Activated B cell treated with CpG ODN at 0.5 μM for 24 hours (primary cell): ENCODE measurements at regions of chr10 and their contacts with region 1.

Region 1: GRCh38 chr10:133329491-133330202 is 7.0 kb downstream of the CALY start:
- DNase-seq: peak; percentile 84
- ATAC-seq: peak; percentile 90
- H3K4me3 Mint-ChIP-seq: peak overlapping the region; percentile 41
- H3K27ac Mint-ChIP-seq: no peak overlapping the region
- H3K4me1 Mint-ChIP-seq: peaks cover 18% of the 10 kb centered on the region
- H3K27me3 Mint-ChIP-seq: peaks cover 39% of the 10 kb centered on the region
- CTCF ChIP-seq: peak; percentile 69

Region 2: GRCh38 chr10:132654702-132655661 is 674.7 kb before region 1 on chr10:
- CTCF ChIA-PET with region 1: no interaction called
- POLR2A ChIA-PET with region 1: no interaction called
- intact Hi-C with region 1: loop called (anchors 10 kb)
- DNase-seq: peak; percentile 46
- ATAC-seq: peak; percentile 77
- H3K4me3 Mint-ChIP-seq: no peak overlapping the region
- H3K27ac Mint-ChIP-seq: no peak overlapping the region
- H3K4me1 Mint-ChIP-seq: peaks cover 2% of the 10 kb centered on the region
- H3K27me3 Mint-ChIP-seq: no peaks in the 10 kb centered on the region
- CTCF ChIP-seq: no peak

Region 3: GRCh38 chr10:132665946-132666704 is 663.5 kb before region 1 on chr10:
- CTCF ChIA-PET with region 1: no interaction called
- POLR2A ChIA-PET with region 1: no interaction called
- intact Hi-C with region 1: no loop called
- DNase-seq: no peak
- ATAC-seq: no peak
- H3K4me3 Mint-ChIP-seq: no peak overlapping the region
- H3K27ac Mint-ChIP-seq: no peak overlapping the region
- H3K4me1 Mint-ChIP-seq: peaks cover 4% of the 10 kb centered on the region
- H3K27me3 Mint-ChIP-seq: no peaks in the 10 kb centered on the region
- CTCF ChIP-seq: no peak

Region 4: DNA sequence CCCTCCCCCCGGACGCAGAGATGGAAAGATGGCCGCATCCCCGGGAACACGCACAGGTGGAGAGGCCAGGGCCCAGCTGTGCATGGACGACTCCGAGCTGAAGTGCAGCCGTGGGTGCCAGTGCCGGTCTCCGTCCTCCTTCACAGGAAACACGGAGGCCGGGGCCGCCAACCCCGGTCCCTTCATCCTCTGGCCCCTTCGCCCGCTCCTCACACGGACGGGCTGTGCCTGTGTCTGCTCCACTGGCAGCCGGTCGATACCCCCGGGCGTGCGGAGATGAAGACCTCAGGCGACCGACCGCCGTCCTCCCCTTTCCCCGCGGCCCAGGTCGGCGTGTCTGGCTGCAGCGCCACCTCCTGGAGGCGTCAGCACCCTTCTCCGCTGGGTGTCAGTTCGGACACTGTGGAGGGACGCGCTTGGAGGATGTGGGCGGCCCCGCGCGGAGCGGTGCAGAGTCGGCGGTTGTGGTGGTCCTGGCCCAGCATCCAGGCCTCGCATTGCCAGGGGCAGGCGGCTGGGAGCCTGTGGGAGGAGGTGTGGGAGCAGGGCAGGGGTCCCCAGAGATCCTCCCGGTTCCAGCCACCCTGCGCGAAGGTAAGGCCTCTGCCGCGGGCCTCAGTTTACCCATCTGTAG is 11.0 kb before region 1 on chr10:
- CTCF ChIA-PET with region 1: interaction called, 4 read pairs
- POLR2A ChIA-PET with region 1: interaction called, 16 read pairs
- intact Hi-C with region 1: loop called (anchors 1 kb)
- DNase-seq: peak; percentile 69
- ATAC-seq: peak; percentile 91
- H3K4me3 Mint-ChIP-seq: peak overlapping the region; percentile 42
- H3K27ac Mint-ChIP-seq: no peak overlapping the region
- H3K4me1 Mint-ChIP-seq: peaks cover 13% of the 10 kb centered on the region
- H3K27me3 Mint-ChIP-seq: peaks cover 24% of the 10 kb centered on the region
- CTCF ChIP-seq: peak; percentile 22

Region 5: DNA sequence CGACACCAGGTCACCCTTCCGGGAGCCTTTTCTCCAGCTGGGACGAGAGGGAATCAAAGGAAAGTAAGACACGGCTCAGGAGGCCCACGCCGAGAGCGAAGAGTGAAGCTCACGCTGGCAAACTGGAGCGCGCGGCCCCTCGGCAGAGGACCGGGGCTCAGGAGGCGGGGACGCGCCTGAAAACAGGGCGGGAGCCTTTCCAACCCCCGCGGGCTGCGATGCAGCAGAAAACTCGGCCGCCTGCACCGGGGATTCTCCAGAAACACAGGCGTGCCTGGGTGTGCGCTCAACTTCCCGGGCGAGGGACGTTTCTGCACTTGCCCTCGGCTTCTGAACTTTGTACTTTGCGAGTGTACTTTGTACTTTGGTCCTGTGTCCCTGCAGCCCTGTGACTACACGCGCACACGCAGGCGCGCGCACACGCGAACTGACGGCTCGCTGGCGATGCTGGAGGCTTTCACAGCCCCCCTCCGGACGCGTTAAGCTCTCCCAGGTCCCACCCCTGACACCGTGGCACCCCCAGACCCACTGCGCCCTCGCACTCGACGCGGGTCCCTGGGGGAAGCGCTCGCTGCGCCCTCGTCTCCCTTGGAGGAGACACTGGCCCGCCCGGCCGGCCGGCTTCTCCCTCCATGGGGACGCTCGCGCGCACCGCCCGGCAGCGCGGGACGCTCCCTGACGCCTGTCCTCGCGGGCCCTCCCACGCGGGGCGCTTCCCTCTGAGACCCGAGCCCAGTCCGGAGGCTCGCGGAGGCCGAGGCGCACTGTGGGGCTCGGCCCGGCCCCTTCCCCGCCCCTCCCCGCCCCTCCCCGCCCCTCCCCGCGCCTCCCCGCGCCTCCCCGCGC is 48.8 kb after region 1 on chr10:
- CTCF ChIA-PET with region 1: interaction called, 5 read pairs
- POLR2A ChIA-PET with region 1: no interaction called
- intact Hi-C with region 1: loop called (anchors 5 kb)
- DNase-seq: peak; percentile 70
- ATAC-seq: peak; percentile 48
- H3K4me3 Mint-ChIP-seq: peak overlapping the region; percentile 87
- H3K27ac Mint-ChIP-seq: peak overlapping the region; percentile 61
- H3K4me1 Mint-ChIP-seq: peaks cover 45% of the 10 kb centered on the region
- H3K27me3 Mint-ChIP-seq: no peaks in the 10 kb centered on the region
- CTCF ChIP-seq: no peak

Region 6: DNA sequence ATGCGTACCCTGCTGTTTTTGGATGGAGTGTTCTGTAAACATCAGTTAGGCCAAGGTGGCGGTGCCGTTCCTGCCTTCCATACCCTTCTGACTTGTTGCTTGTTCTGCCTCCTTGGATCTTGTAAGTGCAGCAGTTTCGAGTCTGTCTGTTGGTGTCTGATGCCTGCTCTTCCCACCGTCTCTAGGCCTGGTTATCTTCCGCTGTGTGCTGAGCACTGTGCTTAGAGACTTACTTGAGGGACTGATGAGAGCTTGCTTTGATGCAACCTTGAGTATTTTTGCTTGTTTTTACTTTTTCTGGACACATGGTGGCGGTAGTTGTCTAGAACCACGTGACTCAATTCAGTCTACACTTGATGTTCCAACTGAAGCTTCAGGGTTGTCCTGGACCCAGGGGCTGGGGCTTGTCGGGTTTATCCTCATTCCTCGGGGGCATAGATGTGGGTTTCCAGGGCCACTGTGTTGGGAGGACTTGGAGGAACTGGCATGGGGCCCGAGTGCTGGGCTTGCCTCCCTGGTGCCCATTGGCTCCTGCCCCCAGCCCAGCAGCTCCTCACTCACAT is 109.1 kb after region 1 on chr10:
- CTCF ChIA-PET with region 1: interaction called, 15 read pairs
- POLR2A ChIA-PET with region 1: no interaction called
- intact Hi-C with region 1: loop called (anchors 1 kb)
- DNase-seq: no peak
- ATAC-seq: no peak
- H3K4me3 Mint-ChIP-seq: no peak overlapping the region
- H3K27ac Mint-ChIP-seq: no peak overlapping the region
- H3K4me1 Mint-ChIP-seq: peaks cover 6% of the 10 kb centered on the region
- H3K27me3 Mint-ChIP-seq: peaks cover 5% of the 10 kb centered on the region
- CTCF ChIP-seq: no peak

Region 7: GRCh38 chr10:133489816-133490588 is 160.4 kb after region 1 on chr10:
- CTCF ChIA-PET with region 1: interaction called, 17 read pairs
- POLR2A ChIA-PET with region 1: no interaction called
- intact Hi-C with region 1: no loop called
- DNase-seq: no peak
- ATAC-seq: no peak
- H3K4me3 Mint-ChIP-seq: no peak overlapping the region
- H3K27ac Mint-ChIP-seq: no peak overlapping the region
- H3K4me1 Mint-ChIP-seq: no peaks in the 10 kb centered on the region
- H3K27me3 Mint-ChIP-seq: peaks cover 4% of the 10 kb centered on the region
- CTCF ChIP-seq: no peak

Region 8: DNA sequence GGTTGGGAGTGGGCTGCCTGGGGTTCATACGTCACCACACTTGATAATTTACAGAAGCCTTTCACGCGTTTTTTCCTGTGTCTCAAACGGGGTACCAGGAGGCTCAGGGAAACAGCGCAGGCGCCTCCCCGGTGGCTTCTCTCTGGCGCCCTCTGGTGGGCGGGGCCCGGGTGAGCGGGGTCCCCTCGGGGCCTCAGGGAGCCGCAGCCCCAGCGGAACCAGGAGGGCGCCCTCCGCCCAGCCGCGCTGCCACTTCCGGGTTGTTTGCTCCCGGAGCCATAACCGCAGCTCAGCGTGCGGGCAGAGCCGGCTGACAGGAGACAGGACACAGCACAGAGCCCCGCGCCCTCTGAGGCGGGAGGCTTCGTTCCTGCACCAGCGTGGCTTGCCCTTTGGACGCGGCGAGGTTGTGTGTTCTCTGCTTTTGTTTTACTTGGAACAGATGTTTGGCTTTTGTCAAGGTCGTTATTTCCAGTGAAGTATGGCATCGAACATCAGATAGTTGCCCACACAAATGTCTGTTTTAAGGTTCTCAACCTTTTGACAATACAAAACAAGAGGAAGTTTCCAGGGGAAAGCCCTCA is 190.6 kb after region 1 on chr10:
- CTCF ChIA-PET with region 1: interaction called, 24 read pairs
- POLR2A ChIA-PET with region 1: no interaction called
- intact Hi-C with region 1: loop called (anchors 1 kb)
- DNase-seq: peak; percentile 90
- ATAC-seq: peak; percentile 99
- H3K4me3 Mint-ChIP-seq: peak overlapping the region; percentile 73
- H3K27ac Mint-ChIP-seq: peak overlapping the region; percentile 50
- H3K4me1 Mint-ChIP-seq: peaks cover 10% of the 10 kb centered on the region
- H3K27me3 Mint-ChIP-seq: peaks cover 16% of the 10 kb centered on the region
- CTCF ChIP-seq: peak; percentile 73